ENCODE measurements at regions of chr1 and their contacts with region 1.

Region 1: GRCh38 chr1:205507890-205508714 is 3.6 kb downstream of the CDK18 start:
- DNase-seq: no peak
- ATAC-seq: no peak
- H3K4me3 ChIP-seq: no peak overlapping the region
- H3K27ac ChIP-seq: no peak overlapping the region
- H3K4me1 ChIP-seq: peaks cover 0 to 3% (median 0%) of the 10 kb centered on the region in 3 donors
- H3K27me3 ChIP-seq: no peaks in the 10 kb centered on the region
- CTCF ChIP-seq: no peak

Region 2: GRCh38 chr1:205321164-205321958 is 186.7 kb before region 1 on chr1 and contains the start of gene NUAK2:
- intact Hi-C with region 1: no loop called
- DNase-seq: peak; percentile 92 to 97 (median 94)
- ATAC-seq: peak; percentile 70 to 83 (median 74)
- H3K4me3 ChIP-seq: peak within 1 kb of the TSS; percentile 68 to 95 (median 78)
- H3K27ac ChIP-seq: peak within 1 kb of the TSS; percentile 80 to 93 (median 88)
- H3K4me1 ChIP-seq: peaks cover 25 to 46% (median 34%) of the 10 kb centered on the region in 3 donors
- H3K27me3 ChIP-seq: no peaks in the 10 kb centered on the region
- CTCF ChIP-seq: peak in 1 of 4 donors; percentile 12
- total RNA-seq, gene NUAK2: 6.3 to 14.4 (median 8.6) TPM

Region 3: GRCh38 chr1:205477759-205478247 is 30.3 kb before region 1 on chr1:
- intact Hi-C with region 1: loop called in 1 of 3 experiments (anchors 2 kb)
- DNase-seq: peak; percentile 60 to 87 (median 82)
- ATAC-seq: peak; percentile 76 to 86 (median 84)
- H3K4me3 ChIP-seq: no peak overlapping the region
- H3K27ac ChIP-seq: peak overlapping the region; percentile 75 to 83 (median 81)
- H3K4me1 ChIP-seq: no peaks in the 10 kb centered on the region
- H3K27me3 ChIP-seq: no peaks in the 10 kb centered on the region
- CTCF ChIP-seq: no peak